Activated naive CD4-positive, alpha-beta T cell treated with anti-CD3 and anti-CD28 coated beads for 36 hours (primary cell): ENCODE measurements at regions of chr20 and their contacts with region 1.

Region 1: DNA sequence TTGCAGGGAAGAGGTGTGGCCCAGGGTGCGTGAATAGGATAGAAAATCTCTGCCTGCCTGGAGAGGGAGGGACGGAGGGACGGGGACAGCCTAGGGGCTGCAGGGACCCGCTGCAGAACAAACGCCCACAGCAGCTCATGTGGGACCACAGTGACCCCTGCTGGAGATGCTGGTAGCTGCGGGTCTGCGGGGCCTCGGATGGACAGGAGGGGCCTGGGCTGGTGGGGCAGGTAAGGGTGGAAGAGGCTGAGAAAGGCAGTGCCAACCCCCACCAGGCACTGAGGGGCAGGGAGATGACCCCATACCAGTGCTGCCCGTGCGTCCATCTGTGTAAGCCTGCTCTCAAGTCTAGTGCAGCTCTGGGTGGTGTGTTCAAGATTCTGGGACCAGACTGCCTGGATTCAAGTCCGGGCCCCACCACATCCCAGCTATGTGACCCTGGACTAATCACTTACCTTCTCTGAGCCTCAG is 39.4 kb downstream of the KIAA1755 start:
- DNase-seq: peak; percentile 76
- H3K4me3 Mint-ChIP-seq: no peak overlapping the region
- H3K27ac Mint-ChIP-seq: no peak overlapping the region
- H3K4me1 Mint-ChIP-seq: no peaks in the 10 kb centered on the region
- H3K27me3 Mint-ChIP-seq: no peaks in the 10 kb centered on the region

Region 2: GRCh38 chr20:37564388-37565133 is 656.6 kb before region 1 on chr20:
- CTCF ChIA-PET with region 1: interaction called, 32 read pairs
- intact Hi-C with region 1: loop called (anchors 5 kb)
- DNase-seq: peak; percentile 39
- H3K4me3 Mint-ChIP-seq: no peak overlapping the region
- H3K27ac Mint-ChIP-seq: no peak overlapping the region
- H3K4me1 Mint-ChIP-seq: peaks cover 2% of the 10 kb centered on the region
- H3K27me3 Mint-ChIP-seq: peaks cover 37% of the 10 kb centered on the region

Region 3: DNA sequence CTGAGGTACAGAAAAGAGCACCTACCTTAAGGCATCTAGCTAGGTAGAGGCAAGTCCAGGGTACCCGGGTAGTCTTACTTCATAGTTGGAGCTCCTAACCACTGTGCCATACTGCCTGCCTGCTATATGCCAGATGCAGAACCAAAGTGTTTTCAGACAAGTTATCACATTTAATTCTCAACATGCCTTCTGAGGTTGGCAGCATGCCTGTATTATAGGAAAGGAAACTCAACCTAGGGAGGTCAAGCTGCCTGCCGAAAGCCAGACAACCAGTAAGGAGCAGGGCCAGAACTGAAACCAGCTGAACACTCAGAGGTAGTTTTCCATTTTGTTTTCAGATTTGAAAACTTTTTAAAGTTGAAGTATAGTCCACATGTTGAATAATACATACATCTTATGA is 522.0 kb before region 1 on chr20:
- CTCF ChIA-PET with region 1: no interaction called
- intact Hi-C with region 1: no loop called
- DNase-seq: no peak
- H3K4me3 Mint-ChIP-seq: no peak overlapping the region
- H3K27ac Mint-ChIP-seq: no peak overlapping the region
- H3K4me1 Mint-ChIP-seq: peaks cover 33% of the 10 kb centered on the region
- H3K27me3 Mint-ChIP-seq: no peaks in the 10 kb centered on the region

Region 4: GRCh38 chr20:37901654-37902503 is 319.3 kb before region 1 on chr20:
- CTCF ChIA-PET with region 1: interaction called, 4 read pairs
- intact Hi-C with region 1: loop called (anchors 1 kb)
- DNase-seq: peak; percentile 61
- H3K4me3 Mint-ChIP-seq: peak overlapping the region; percentile 26
- H3K27ac Mint-ChIP-seq: no peak overlapping the region
- H3K4me1 Mint-ChIP-seq: peaks cover 13% of the 10 kb centered on the region
- H3K27me3 Mint-ChIP-seq: peaks cover 62% of the 10 kb centered on the region

Region 5: DNA sequence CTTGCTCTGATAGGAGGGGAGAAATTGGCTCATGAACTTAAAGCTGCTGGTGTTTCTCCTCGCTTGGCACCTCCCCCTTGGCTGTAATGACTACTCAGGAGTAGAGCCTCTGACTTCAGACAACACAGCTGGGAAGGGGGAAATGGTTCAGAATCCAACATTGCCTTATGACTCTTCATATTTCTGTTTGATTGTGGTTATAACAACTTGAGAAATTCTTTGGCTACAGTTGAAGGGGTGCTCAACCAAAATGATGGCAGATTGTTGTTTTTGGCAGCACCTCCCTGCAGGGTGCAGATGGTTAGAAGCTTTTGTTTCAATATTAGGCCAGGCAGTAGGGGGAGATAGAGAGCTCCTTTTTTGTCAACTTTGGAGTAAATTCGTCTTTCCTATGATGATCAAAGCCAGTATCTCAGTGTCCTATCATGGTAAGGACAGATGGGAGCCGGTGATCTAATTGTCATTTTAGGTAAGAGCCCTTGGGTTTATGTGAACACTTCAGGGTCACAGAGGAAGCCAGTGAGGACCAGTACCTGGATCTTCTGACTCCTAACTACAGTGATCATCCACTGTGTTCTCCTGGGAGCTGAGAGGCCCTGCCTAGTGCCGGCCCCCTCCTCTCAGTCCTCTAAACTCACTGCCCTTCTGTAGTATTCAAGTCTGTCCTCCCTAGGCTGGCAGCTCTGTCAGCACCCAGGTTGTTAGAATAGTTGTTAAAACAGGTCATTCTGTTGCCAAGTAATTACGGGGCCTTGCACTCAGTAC is 147.7 kb before region 1 on chr20:
- CTCF ChIA-PET with region 1: interaction called, 32 read pairs
- intact Hi-C with region 1: loop called (anchors 5 kb)
- DNase-seq: peak; percentile 25
- H3K4me3 Mint-ChIP-seq: no peak overlapping the region
- H3K27ac Mint-ChIP-seq: no peak overlapping the region
- H3K4me1 Mint-ChIP-seq: peaks cover 2% of the 10 kb centered on the region
- H3K27me3 Mint-ChIP-seq: no peaks in the 10 kb centered on the region

Region 6: DNA sequence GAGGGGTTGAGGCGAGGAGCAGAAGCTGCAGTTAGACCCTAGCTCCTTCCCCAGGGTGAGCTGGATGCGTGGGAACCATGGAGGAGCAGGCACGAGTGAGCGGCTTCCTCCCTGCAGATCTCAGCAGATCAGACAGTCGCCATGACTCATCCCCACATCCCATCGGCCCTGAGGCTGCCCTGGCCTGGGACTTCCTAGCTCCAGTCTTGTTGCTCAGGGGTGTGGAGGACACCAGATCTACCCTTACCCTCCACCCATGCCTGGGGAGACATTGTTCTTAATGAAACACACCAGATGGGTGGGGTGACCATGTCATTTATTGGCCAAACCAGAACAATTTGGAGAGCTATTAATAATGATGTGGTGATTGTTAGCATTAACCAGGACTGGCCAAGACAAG is 19.8 kb before region 1 on chr20:
- CTCF ChIA-PET with region 1: interaction called, 18 read pairs
- intact Hi-C with region 1: no loop called
- DNase-seq: no peak
- H3K4me3 Mint-ChIP-seq: no peak overlapping the region
- H3K27ac Mint-ChIP-seq: no peak overlapping the region
- H3K4me1 Mint-ChIP-seq: no peaks in the 10 kb centered on the region
- H3K27me3 Mint-ChIP-seq: no peaks in the 10 kb centered on the region

Region 7: GRCh38 chr20:38242848-38243449 is 21.8 kb after region 1 on chr20:
- CTCF ChIA-PET with region 1: interaction called, 12 read pairs
- intact Hi-C with region 1: no loop called
- DNase-seq: peak; percentile 49
- H3K4me3 Mint-ChIP-seq: no peak overlapping the region
- H3K27ac Mint-ChIP-seq: no peak overlapping the region
- H3K4me1 Mint-ChIP-seq: no peaks in the 10 kb centered on the region
- H3K27me3 Mint-ChIP-seq: peaks cover 5% of the 10 kb centered on the region

Region 8: GRCh38 chr20:38270869-38271605 is 49.9 kb after region 1 on chr20:
- CTCF ChIA-PET with region 1: no interaction called
- intact Hi-C with region 1: no loop called
- DNase-seq: no peak
- H3K4me3 Mint-ChIP-seq: no peak overlapping the region
- H3K27ac Mint-ChIP-seq: no peak overlapping the region
- H3K4me1 Mint-ChIP-seq: no peaks in the 10 kb centered on the region
- H3K27me3 Mint-ChIP-seq: peaks cover 13% of the 10 kb centered on the region

Region 9: GRCh38 chr20:38441916-38442315 is 220.8 kb after region 1 on chr20:
- CTCF ChIA-PET with region 1: no interaction called
- intact Hi-C with region 1: no loop called
- DNase-seq: no peak
- H3K4me3 Mint-ChIP-seq: no peak overlapping the region
- H3K27ac Mint-ChIP-seq: no peak overlapping the region
- H3K4me1 Mint-ChIP-seq: peaks cover 8% of the 10 kb centered on the region
- H3K27me3 Mint-ChIP-seq: peaks cover 3% of the 10 kb centered on the region